ENCODE measurements at regions of chr22 and their contacts with region 1.

Region 1: GRCh38 chr22:27880778-27881394 is 38.2 kb downstream of the PITPNB start:
- DNase-seq: peak in 3 of 5 donors; percentile 42 to 90 (median 88)
- H3K4me3 ChIP-seq: no peak overlapping the region
- H3K27ac ChIP-seq: no peak overlapping the region
- H3K4me1 ChIP-seq: peaks cover 3 to 11% (median 5%) of the 10 kb centered on the region in 3 donors
- H3K27me3 ChIP-seq: no peaks in the 10 kb centered on the region
- CTCF ChIP-seq: peak; percentile 64

Region 2: GRCh38 chr22:28014211-28015045 is 133.5 kb after region 1 on chr22:
- intact Hi-C with region 1: loop called (anchors 5 kb)
- DNase-seq: peak in 3 of 5 donors; percentile 42 to 47 (median 46)
- H3K4me3 ChIP-seq: no peak overlapping the region
- H3K27ac ChIP-seq: no peak overlapping the region
- H3K4me1 ChIP-seq: no peaks in the 10 kb centered on the region
- H3K27me3 ChIP-seq: no peaks in the 10 kb centered on the region
- CTCF ChIP-seq: no peak